Upper lobe of right lung (tissue), 1 donor: ENCODE measurements at regions of chr3 and their contacts with region 1.

Region 1: DNA sequence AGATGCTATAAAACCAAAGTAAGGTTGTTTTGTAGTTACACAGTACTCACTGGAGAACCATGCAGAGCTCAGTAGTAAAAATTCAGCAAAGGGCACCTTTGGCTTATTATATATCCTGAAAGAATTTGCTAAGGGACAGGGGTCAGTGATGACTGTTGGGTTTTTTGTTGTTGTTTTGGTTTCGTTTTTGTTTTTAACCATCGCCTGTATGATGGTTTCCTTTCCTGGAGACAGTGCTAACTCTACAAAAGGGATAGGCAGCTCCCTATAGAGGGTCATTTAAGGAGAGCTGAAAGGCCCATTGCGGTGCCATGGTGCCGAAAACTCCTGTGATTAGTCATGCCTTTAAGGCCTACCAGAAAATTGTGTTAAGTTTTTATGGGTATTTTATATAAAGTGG is 118.2 kb upstream of the GOLIM4 start:
- DNase-seq: no peak
- ATAC-seq: no peak
- H3K4me3 ChIP-seq: no peak overlapping the region
- H3K27ac ChIP-seq: no peak overlapping the region
- H3K4me1 ChIP-seq: no peaks in the 10 kb centered on the region
- H3K27me3 ChIP-seq: no peaks in the 10 kb centered on the region
- CTCF ChIP-seq: no peak

Region 2: GRCh38 chr3:168847291-168847883 is 633.5 kb after region 1 on chr3:
- intact Hi-C with region 1: loop called (anchors 5 kb)
- DNase-seq: no peak
- ATAC-seq: peak; percentile 52
- H3K4me3 ChIP-seq: no peak overlapping the region
- H3K27ac ChIP-seq: no peak overlapping the region
- H3K4me1 ChIP-seq: no peaks in the 10 kb centered on the region
- H3K27me3 ChIP-seq: no peaks in the 10 kb centered on the region
- CTCF ChIP-seq: peak; percentile 57